ENCODE measurements at regions of chr2 and their contacts with region 1.

Region 1: DNA sequence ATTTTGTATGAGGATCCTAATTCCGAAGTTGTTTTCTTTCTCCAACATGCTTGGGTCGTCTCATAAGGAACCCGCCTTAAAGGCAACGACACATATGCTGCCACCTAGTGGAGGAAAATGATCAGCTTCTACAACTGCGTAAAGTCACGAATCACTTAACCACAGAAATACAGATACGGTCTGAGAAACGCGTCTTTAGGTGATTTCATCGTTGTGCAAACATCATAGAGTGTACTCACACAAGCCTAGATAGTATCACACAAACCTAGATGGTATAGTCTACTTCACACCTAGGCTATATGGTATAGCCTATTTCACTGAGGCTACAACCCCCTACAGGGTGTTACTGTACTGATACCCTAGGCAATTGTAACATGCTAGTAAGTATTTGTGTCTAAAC is 13.1 kb downstream of the GNLY start:
- DNase-seq: peak in 4 of 10 donors; percentile 46 to 76 (median 55)
- H3K4me3 ChIP-seq: peak overlapping the region in 2 of 59 donors; percentile 1 to 10
- H3K27ac ChIP-seq: peak overlapping the region in 48 of 59 donors; percentile 2 to 91 (median 72)
- H3K27me3 ChIP-seq: no peaks in the 10 kb centered on the region
- CTCF ChIP-seq: peak; percentile 79 to 95 (median 89)

Region 2: GRCh38 chr2:85635636-85636035 is 71.7 kb before region 1 on chr2:
- intact Hi-C with region 1: loop called (anchors 5 kb)
- DNase-seq: no peak
- H3K4me3 ChIP-seq: no peak overlapping the region
- H3K27ac ChIP-seq: peak overlapping the region in 10 of 59 donors; percentile 10 to 56 (median 26)
- H3K27me3 ChIP-seq: no peaks in the 10 kb centered on the region
- CTCF ChIP-seq: no peak